CD4-positive, alpha-beta T cell (primary cell): ENCODE measurements at regions of chr11 and their contacts with region 1.

Region 1: DNA sequence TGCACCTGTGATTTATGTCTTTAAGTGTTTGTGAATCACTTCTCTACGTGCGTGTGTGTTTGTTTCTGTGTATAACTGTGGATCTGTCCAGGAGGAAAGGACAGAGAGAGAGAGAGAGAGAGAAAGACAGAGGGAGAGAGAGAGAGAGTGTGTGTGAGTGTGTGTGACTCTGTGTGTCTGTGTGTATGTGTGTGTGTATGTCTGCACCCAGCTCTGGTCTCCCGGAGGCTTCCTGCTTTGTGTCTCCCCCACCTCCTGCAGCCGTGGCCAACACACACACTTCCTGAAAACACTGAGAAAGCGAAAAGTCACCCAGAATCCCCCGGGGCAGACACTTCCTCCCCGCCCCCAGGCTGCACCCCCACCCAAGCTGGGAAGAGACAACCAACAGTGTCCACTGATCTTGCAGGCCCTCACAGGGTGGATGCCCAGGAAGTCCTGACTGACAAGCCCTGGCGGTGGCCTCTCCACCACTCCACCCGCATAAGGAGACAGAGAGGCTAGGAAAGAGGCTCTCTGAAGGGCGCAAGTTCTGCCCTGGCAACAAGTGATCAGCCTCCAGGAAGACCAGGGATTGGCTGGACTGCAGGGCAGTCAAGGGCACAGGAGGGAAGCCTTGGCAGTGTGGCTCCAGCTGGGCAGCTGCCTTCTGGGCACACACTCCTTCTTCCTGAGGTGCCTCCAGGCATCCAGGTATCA is 30.0 kb downstream of the ARAP1 start:
- DNase-seq: peak; percentile 71 to 94 (median 84)
- ATAC-seq: peak; percentile 88
- H3K4me3 ChIP-seq: peak overlapping the region; percentile 83
- H3K4me3 Mint-ChIP-seq: peak overlapping the region; percentile 91
- H3K27ac ChIP-seq: peak overlapping the region; percentile 72 to 79
- H3K27ac Mint-ChIP-seq: peak overlapping the region; percentile 90
- H3K4me1 ChIP-seq: peaks cover 74% of the 10 kb centered on the region
- H3K4me1 Mint-ChIP-seq: peaks cover 59% of the 10 kb centered on the region
- H3K27me3 ChIP-seq: no peaks in the 10 kb centered on the region
- H3K27me3 Mint-ChIP-seq: no peaks in the 10 kb centered on the region
- CTCF ChIP-seq: no peak

Region 2: DNA sequence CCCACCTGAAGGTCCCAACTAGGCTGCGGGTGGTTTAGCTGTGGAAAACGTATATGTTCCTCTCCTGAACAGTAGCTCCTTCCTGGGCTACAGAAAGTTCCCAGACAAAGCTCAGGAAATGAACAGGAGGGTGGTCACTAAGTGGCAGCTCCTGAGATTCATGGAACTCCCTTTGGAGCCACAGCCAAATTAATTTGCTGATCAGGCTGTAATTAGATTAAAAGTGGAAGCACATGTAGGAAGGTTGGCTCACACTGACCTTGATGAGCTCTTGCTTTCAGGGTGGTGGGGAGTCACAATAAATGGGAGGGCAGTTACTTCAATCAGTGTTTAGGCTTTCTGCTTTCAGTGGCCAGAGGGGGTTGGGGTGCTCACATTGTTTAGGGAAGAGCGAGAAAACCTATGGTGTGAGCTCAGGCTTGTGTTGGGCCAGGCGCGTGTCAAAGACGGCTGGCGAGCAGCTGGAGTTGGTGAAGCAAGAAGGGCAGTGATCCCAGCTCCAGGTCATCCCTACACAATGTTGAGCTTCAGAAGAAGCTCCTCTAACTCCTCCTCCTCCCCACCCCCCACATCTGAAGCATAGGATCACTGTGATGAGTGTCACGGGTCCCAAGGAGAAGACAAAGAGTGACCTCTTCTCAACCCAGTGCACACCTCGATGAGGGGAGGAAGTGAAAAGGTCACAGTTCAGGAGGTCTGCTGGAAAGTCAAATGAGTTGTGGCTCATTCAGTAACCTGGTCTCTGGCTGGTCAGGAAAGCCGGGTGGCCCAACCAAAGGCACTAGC is 330.4 kb before region 1 on chr11:
- CTCF ChIA-PET with region 1: no interaction called
- POLR2A ChIA-PET with region 1: no interaction called
- intact Hi-C with region 1: no loop called
- DNase-seq: no peak
- ATAC-seq: no peak
- H3K4me3 ChIP-seq: no peak overlapping the region
- H3K4me3 Mint-ChIP-seq: no peak overlapping the region
- H3K27ac ChIP-seq: no peak overlapping the region
- H3K27ac Mint-ChIP-seq: no peak overlapping the region
- H3K4me1 ChIP-seq: no peaks in the 10 kb centered on the region
- H3K4me1 Mint-ChIP-seq: no peaks in the 10 kb centered on the region
- H3K27me3 ChIP-seq: no peaks in the 10 kb centered on the region
- H3K27me3 Mint-ChIP-seq: no peaks in the 10 kb centered on the region
- CTCF ChIP-seq: no peak

Region 3: DNA sequence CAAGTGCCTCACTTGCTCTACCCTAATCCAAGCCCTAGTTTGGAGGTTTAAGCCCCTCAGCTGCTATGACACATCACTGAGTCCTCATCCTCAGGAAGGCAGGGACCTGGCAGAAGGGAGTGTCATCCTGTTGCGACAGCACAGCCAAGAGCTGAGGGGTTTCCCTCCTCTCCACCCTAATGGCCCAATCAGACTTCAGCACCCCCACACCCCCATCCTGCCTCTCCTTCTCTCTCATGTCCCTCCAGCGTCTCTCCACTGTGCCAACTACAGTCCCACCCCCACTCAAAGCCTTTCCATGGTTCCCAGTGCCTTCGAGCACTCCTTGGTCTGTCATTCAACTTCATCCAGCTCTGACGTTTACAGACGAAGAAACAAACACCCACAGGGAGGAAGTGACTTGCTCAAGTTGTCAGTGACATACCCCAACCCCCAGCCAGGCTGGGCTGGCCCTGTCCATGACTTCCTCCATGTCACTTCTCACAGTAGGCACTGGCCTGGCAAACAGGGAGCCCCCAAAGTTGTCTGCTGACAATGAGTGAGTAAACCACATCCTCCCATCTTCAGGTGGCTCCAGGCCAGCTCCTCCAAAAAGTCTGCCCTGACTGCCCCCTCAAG is 14.4 kb after region 1 on chr11:
- CTCF ChIA-PET with region 1: interaction called, 12 read pairs
- POLR2A ChIA-PET with region 1: interaction called, 10 read pairs
- intact Hi-C with region 1: no loop called
- DNase-seq: peak; percentile 37 to 91 (median 59)
- ATAC-seq: peak; percentile 88
- H3K4me3 ChIP-seq: no peak overlapping the region
- H3K4me3 Mint-ChIP-seq: peak overlapping the region; percentile 36
- H3K27ac ChIP-seq: peak overlapping the region; percentile 51 to 83
- H3K27ac Mint-ChIP-seq: peak overlapping the region; percentile 95
- H3K4me1 ChIP-seq: peaks cover 59% of the 10 kb centered on the region
- H3K4me1 Mint-ChIP-seq: peaks cover 53% of the 10 kb centered on the region
- H3K27me3 ChIP-seq: no peaks in the 10 kb centered on the region
- H3K27me3 Mint-ChIP-seq: no peaks in the 10 kb centered on the region
- CTCF ChIP-seq: no peak

Region 4: DNA sequence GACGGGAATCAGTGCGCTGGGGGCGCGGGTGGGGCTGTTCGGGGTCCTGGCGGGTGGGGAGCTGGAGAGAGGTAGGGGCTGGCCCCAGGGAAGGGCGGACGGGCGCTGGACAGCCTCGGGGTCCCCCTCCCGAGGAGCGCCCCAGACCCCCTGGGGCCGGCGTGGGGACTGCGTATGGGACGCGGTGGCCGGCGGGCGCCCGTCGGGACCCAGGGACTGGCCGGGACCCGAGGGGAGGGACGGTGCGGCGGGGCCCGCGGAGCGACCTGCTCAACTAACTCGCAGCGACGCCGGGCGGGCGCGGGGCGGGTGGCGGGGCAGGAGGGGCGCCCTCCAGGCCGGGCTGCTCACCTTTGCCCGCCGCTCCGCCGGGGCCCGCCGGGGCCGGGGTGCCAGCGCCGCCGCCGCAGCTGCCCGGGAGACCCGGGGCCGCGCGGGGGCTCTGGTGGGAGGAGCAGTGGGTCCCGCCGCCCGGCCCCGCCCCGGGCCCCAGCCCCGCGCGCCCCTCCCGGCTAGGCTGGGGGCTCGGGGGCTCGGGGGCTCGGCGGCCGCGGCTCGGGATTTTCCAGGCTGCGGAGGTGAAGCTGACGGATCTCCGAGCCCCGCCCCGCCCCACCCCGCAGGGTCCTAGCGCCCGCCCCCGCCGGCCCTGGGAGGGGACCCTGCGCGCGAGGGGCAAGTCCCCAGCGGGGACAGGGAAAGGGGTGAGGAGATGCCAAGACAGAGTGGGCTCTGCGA is 59.3 kb after region 1 on chr11:
- CTCF ChIA-PET with region 1: interaction called, 14 read pairs
- POLR2A ChIA-PET with region 1: interaction called, 4 read pairs
- intact Hi-C with region 1: no loop called
- DNase-seq: peak; percentile 22 to 87 (median 50)
- ATAC-seq: peak; percentile 81
- H3K4me3 ChIP-seq: peak overlapping the region; percentile 55
- H3K4me3 Mint-ChIP-seq: peak overlapping the region; percentile 90
- H3K27ac ChIP-seq: peak overlapping the region in 1 of 2 donors; percentile 17
- H3K27ac Mint-ChIP-seq: peak overlapping the region; percentile 45
- H3K4me1 ChIP-seq: peaks cover 45% of the 10 kb centered on the region
- H3K4me1 Mint-ChIP-seq: peaks cover 24% of the 10 kb centered on the region
- H3K27me3 ChIP-seq: no peaks in the 10 kb centered on the region
- H3K27me3 Mint-ChIP-seq: no peaks in the 10 kb centered on the region
- CTCF ChIP-seq: no peak

Region 5: GRCh38 chr11:72814286-72815109 is 92.3 kb after region 1 on chr11 and contains the start of gene ATG16L2:
- CTCF ChIA-PET with region 1: interaction called, 28 read pairs
- POLR2A ChIA-PET with region 1: interaction called, 13 read pairs
- intact Hi-C with region 1: loop called (anchors 1 to 5 kb)
- DNase-seq: peak in 13 of 14 experiments; percentile 78 to 95 (median 87)
- ATAC-seq: peak; percentile 81
- H3K4me3 ChIP-seq: peak within 1 kb of the TSS; percentile 96
- H3K4me3 Mint-ChIP-seq: peak within 1 kb of the TSS; percentile 99
- H3K27ac ChIP-seq: peak within 1 kb of the TSS; percentile 97 to 100
- H3K27ac Mint-ChIP-seq: peak within 1 kb of the TSS; percentile 97
- H3K4me1 ChIP-seq: peaks cover 38% of the 10 kb centered on the region
- H3K4me1 Mint-ChIP-seq: peaks cover 57% of the 10 kb centered on the region
- H3K27me3 ChIP-seq: no peaks in the 10 kb centered on the region
- H3K27me3 Mint-ChIP-seq: no peaks in the 10 kb centered on the region
- CTCF ChIP-seq: peak; percentile 29
- total RNA-seq, gene ATG16L2: 58.3 to 61.6 TPM

Region 6: GRCh38 chr11:72848846-72849466 is 126.8 kb after region 1 on chr11:
- CTCF ChIA-PET with region 1: interaction called, 11 read pairs
- POLR2A ChIA-PET with region 1: interaction called, 6 read pairs
- intact Hi-C with region 1: loop called (anchors 1 kb)
- DNase-seq: peak in 12 of 14 experiments; percentile 23 to 72 (median 32)
- ATAC-seq: peak; percentile 64
- H3K4me3 ChIP-seq: no peak overlapping the region
- H3K4me3 Mint-ChIP-seq: no peak overlapping the region
- H3K27ac ChIP-seq: no peak overlapping the region
- H3K27ac Mint-ChIP-seq: peak overlapping the region; percentile 25
- H3K4me1 ChIP-seq: peaks cover 4% of the 10 kb centered on the region
- H3K4me1 Mint-ChIP-seq: peaks cover 12% of the 10 kb centered on the region
- H3K27me3 ChIP-seq: no peaks in the 10 kb centered on the region
- H3K27me3 Mint-ChIP-seq: no peaks in the 10 kb centered on the region
- CTCF ChIP-seq: peak; percentile 72

Region 7: DNA sequence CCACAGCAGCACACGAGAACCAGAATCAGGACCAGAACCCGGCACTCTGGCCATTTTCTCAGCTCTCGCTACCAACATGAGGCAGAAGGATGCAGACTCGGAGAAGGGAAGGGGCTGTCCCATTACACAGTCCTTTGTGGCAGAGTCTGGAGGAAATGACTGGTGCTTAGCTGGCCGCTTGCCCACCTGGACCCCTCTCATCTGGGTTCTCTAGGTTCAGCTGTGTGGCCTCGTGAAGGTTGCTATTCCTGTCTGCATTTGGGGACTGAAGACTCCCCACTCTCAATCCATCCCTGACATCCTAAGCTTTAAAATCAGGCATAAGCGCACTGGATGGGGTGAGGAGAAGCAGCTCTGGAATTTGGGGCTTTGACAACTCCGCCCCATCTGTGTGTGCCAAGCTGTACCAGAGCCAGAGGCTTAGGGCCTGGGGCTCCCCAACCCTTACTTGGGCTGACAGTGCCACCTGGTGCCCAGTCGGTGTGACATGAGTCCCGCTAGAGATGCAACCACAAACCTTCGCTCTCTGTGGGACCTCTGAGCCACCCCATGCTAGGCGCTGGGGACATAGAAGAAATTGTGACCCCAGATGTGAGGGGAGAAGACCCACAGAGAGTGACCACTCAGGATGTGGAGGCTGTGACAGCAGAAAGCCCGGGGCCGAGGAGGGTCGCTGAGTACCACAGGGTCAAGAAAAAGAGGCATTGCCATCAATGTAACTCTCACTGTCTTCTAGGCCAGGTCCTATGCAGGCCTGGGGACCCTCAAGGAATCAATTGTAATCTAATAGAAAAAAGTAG is 455.8 kb after region 1 on chr11:
- CTCF ChIA-PET with region 1: interaction called, 6 read pairs
- POLR2A ChIA-PET with region 1: interaction called, 4 read pairs
- intact Hi-C with region 1: loop called (anchors 1 kb)
- DNase-seq: peak; percentile 71 to 89 (median 75)
- ATAC-seq: peak; percentile 100
- H3K4me3 ChIP-seq: no peak overlapping the region
- H3K4me3 Mint-ChIP-seq: no peak overlapping the region
- H3K27ac ChIP-seq: no peak overlapping the region
- H3K27ac Mint-ChIP-seq: no peak overlapping the region
- H3K4me1 ChIP-seq: peaks cover 7% of the 10 kb centered on the region
- H3K4me1 Mint-ChIP-seq: no peaks in the 10 kb centered on the region
- H3K27me3 ChIP-seq: no peaks in the 10 kb centered on the region
- H3K27me3 Mint-ChIP-seq: no peaks in the 10 kb centered on the region
- CTCF ChIP-seq: peak; percentile 78